AG04450 (cell line): ENCODE measurements at regions of chr5 and their contacts with region 1.

Region 1: GRCh38 chr5:150108711-150109514 is 22.6 kb upstream of the CSF1R start:
- DNase-seq: no peak
- H3K4me3 ChIP-seq: no peak overlapping the region
- H3K27ac ChIP-seq: peak overlapping the region; percentile 11
- H3K27me3 ChIP-seq: no peaks in the 10 kb centered on the region
- CTCF ChIP-seq: no peak

Region 2: GRCh38 chr5:149860801-149861322 is 248.1 kb before region 1 on chr5:
- CTCF ChIA-PET with region 1: interaction called, 10 read pairs
- POLR2A ChIA-PET with region 1: no interaction called
- DNase-seq: no peak
- H3K4me3 ChIP-seq: no peak overlapping the region
- H3K27ac ChIP-seq: no peak overlapping the region
- H3K27me3 ChIP-seq: peaks cover 10% of the 10 kb centered on the region
- CTCF ChIP-seq: no peak

Region 3: DNA sequence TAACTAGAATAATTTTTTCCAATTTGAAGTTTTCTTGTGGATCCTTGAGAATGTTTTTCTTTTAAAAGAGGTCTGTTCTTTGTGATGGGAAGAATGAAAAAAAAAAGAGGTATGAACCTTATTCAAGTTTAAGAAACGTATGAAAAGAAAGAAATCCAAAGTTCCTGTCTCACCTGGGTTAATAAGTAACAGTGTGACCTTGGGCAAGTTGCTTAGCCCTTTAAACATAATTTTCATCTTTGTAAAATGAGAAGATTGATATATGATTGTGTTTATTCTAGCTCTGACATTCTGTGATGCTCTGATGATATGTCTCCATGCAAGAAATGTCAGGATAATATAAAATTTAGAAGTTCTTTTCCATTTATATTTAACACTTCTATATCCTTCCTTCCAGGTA is 129.0 kb before region 1 on chr5:
- CTCF ChIA-PET with region 1: no interaction called
- POLR2A ChIA-PET with region 1: no interaction called
- DNase-seq: no peak
- H3K4me3 ChIP-seq: no peak overlapping the region
- H3K27ac ChIP-seq: no peak overlapping the region
- H3K27me3 ChIP-seq: no peaks in the 10 kb centered on the region
- CTCF ChIP-seq: no peak